ENCODE measurements at regions of chr13 and their contacts with region 1.

Region 1: GRCh38 chr13:25910991-25911419 is 140.8 kb downstream of the SHISA2 start:
- DNase-seq: no peak
- H3K4me3 ChIP-seq: no peak overlapping the region
- H3K27ac ChIP-seq: no peak overlapping the region
- H3K4me1 ChIP-seq: no peaks in the 10 kb centered on the region
- H3K27me3 ChIP-seq: peaks cover 9% of the 10 kb centered on the region; the same call in 1 of the 2 replicates

Region 2: DNA sequence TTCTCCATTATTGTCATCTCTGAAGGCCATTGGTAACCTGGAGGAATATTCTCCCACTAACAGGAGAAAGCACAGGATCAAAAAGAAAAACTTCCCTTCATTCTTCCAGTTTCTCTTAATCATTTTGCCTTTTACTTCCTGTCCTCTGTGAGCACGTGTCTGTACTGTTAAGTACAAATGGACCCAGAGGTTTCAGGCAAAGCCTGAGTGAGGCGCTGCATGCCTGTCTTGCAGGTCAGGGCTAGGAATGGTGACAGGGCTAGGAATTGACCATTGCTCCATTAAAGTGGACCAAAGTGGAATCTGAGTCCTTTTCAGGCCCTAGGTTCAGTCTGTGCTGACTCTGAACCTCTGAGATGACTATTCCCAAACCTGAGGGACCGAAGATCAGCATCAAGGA is 185.9 kb before region 1 on chr13:
- in situ Hi-C with region 1: no loop called
- DNase-seq: no peak
- H3K4me3 ChIP-seq: no peak overlapping the region
- H3K27ac ChIP-seq: no peak overlapping the region
- H3K4me1 ChIP-seq: no peaks in the 10 kb centered on the region
- H3K27me3 ChIP-seq: no peaks in the 10 kb centered on the region

Region 3: DNA sequence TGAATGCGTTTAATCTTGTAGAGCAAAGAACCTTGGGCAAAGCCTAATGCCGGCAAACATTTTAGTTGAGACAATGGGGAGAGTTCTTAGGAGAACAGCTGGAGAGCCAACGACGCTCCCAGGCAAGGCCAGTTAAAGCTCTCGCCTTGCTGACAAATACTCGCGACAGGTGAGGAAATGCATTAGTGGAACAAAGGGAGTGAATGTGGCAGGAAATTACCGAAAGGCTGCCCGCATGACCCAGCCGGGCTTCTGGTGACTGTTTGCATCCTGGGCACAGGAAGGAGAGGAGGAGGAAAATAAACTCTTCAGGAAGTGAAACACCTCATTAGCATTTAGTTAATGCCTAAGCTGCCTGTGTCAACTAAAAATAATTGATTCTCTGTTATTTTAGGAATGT is 66.2 kb after region 1 on chr13:
- in situ Hi-C with region 1: loop called (anchors 10 kb)
- DNase-seq: no peak
- H3K4me3 ChIP-seq: no peak overlapping the region
- H3K27ac ChIP-seq: no peak overlapping the region
- H3K4me1 ChIP-seq: no peaks in the 10 kb centered on the region
- H3K27me3 ChIP-seq: peaks cover 12% of the 10 kb centered on the region

Region 4: DNA sequence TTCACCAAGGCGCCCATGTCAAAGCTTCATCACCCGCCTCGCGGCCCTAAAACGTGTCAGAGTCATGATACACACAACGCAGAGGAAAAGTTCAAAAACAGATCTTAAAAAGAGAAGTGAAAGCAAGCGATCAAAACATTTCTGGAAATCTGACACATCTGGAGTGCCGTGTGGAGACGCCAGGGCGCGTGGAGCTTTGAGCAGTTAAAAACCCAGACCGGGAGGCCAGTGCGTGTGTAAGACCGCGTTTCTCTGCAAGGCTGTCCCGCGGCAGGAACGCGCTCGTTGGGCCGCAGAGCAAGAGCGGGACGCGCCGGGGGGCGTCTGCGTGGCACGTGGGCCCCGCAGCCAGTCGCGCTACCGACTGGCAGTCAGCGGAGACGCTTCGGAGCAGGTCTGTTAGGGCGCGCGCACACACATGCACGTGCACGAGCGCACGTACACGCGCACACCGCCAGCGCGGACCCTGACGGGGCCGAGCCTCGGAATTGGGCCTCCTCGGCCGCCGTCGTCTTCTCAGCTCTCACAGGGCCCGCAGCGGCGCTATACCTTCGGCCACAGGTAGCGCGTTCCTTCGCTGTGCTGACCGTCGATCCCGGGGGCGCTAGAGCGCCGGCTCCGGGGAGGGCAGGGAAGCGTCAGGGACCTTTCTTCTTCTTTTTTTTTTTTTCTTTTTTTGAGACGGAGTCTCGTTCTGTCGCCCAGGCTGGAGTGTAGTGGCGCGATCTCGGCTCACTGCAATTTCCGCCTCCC is 275.3 kb after region 1 on chr13:
- in situ Hi-C with region 1: no loop called
- DNase-seq: peak; percentile 92
- H3K4me3 ChIP-seq: peak overlapping the region; percentile 83
- H3K27ac ChIP-seq: peak overlapping the region; percentile 63
- H3K4me1 ChIP-seq: peaks cover 7% of the 10 kb centered on the region; the same call in 1 of the 2 replicates
- H3K27me3 ChIP-seq: no peaks in the 10 kb centered on the region

Region 5: DNA sequence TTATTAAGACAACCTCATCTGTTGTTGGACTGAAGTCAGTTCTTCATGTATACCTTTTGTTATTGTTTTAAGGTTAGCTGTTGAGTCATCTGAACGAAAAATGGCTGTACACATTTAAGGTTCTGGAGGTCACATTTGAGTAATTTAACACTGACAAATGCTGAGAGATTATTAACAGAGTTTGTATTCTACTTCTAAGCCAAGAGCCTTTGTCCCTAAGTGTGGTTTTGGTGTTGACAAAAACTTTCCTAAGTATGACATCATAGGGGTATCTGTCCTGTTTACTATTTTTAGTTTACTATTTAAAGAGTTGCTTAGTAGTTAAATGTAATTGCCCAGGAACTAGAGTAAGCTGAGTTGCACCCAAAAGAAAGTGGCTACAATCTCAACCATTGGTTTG is 414.9 kb after region 1 on chr13:
- in situ Hi-C with region 1: no loop called
- DNase-seq: no peak
- H3K4me3 ChIP-seq: no peak overlapping the region
- H3K27ac ChIP-seq: no peak overlapping the region
- H3K4me1 ChIP-seq: no peaks in the 10 kb centered on the region
- H3K27me3 ChIP-seq: no peaks in the 10 kb centered on the region